Ascending aorta (tissue), 2 donors: ENCODE measurements at regions of chr17 and their contacts with region 1.

Region 1: DNA sequence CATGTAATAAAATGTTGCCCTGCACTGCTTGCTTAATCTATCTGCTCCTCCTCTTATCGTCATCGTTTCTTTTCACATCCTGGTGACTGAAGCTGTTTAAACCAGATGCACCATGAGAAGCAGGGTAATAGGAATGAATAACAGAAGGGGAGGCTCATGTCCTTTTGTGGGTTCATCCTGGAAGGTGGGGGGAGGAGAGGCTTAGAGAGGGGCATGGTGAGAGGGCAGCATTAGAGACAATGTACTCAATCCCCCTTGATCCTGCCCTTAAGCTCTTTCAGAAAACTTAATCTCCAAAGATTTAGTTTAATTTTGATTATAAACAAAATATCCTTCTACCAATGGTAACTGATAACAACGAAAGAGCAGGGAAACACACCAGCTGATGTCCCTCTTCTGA is 248.5 kb downstream of the CA10 start:
- DNase-seq: no peak
- H3K4me3 ChIP-seq: no peak overlapping the region
- H3K27ac ChIP-seq: no peak overlapping the region
- H3K4me1 ChIP-seq: no peaks in the 10 kb centered on the region
- H3K27me3 ChIP-seq: no peaks in the 10 kb centered on the region
- CTCF ChIP-seq: no peak

Region 2: GRCh38 chr17:51709694-51710633 is 200.0 kb before region 1 on chr17:
- intact Hi-C with region 1: no loop called
- DNase-seq: no peak
- H3K4me3 ChIP-seq: no peak overlapping the region
- H3K27ac ChIP-seq: no peak overlapping the region
- H3K4me1 ChIP-seq: no peaks in the 10 kb centered on the region
- H3K27me3 ChIP-seq: no peaks in the 10 kb centered on the region
- CTCF ChIP-seq: no peak

Region 3: GRCh38 chr17:51876986-51877385 is 33.0 kb before region 1 on chr17:
- intact Hi-C with region 1: no loop called
- DNase-seq: no peak
- H3K4me3 ChIP-seq: no peak overlapping the region
- H3K27ac ChIP-seq: no peak overlapping the region
- H3K4me1 ChIP-seq: no peaks in the 10 kb centered on the region
- H3K27me3 ChIP-seq: no peaks in the 10 kb centered on the region
- CTCF ChIP-seq: no peak

Region 4: DNA sequence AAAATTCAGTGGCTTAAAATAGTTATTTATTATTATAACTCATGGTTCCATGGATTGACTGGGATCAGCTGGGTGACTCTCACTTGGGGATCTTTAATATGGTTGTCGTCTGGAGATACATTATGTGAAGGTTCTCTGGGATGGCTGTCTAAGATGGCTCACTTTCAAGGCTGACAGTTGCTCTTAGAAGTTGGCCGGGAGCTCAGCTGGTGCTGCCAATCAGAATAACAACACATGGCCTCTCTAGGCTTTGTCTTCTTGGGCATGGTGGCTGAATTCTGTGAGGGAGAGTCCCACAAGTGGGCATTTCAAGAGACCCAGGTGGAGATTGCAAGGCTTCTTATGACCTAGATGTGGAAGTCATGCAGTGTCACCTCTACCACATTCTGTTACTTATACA is 21.2 kb before region 1 on chr17:
- intact Hi-C with region 1: no loop called
- DNase-seq: no peak
- H3K4me3 ChIP-seq: no peak overlapping the region
- H3K27ac ChIP-seq: no peak overlapping the region
- H3K4me1 ChIP-seq: no peaks in the 10 kb centered on the region
- H3K27me3 ChIP-seq: no peaks in the 10 kb centered on the region
- CTCF ChIP-seq: no peak

Region 5: GRCh38 chr17:51921500-51921899 is 11.5 kb after region 1 on chr17:
- intact Hi-C with region 1: loop called (anchors 2 kb)
- DNase-seq: no peak
- H3K4me3 ChIP-seq: no peak overlapping the region
- H3K27ac ChIP-seq: no peak overlapping the region
- H3K4me1 ChIP-seq: no peaks in the 10 kb centered on the region
- H3K27me3 ChIP-seq: no peaks in the 10 kb centered on the region
- CTCF ChIP-seq: no peak